ENCODE measurements at regions of chr2 and their contacts with region 1.

Region 1: DNA sequence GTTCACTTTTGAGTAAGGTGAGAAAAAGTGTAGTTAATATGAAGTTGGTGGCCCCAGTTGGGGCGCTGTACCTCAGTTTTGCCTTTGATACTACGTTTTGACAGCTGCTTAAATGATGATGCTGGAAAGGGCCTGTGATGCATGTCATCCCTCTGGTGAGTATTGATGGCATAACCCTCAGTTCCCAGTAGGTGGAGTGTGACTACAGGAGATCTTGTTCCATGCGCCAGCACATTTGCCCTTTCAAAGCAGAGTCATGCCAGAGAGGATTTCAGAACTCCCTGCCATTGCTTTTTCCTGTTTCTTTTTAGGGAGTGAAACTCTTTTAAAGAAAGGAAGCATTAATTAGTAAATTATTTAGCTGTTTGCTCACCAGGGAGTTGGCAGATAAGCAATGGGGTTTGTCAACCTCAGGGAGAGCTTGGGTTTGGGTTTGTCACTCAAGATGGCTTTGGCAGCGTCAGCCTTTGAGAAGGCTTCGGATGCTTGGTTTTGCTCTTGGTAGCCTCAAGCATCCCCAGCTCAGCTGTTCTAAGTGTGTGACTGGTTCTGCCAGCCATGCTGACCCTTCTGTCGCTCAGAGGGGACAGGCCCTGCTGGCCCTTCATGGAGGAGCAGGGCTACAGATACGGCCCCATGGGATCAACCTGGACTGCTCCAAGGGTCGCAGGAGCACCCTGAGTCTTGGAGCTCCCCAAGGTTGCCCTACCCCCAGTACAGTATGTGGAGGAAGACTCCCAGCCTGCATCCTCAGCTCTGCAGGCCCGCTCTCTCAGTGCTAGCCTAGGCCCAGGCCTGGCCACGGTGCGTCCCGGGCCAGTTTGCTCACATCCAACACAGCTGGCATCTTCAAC is 29.1 kb downstream of the ARMC9 start:
- DNase-seq: peak; percentile 65
- H3K4me3 ChIP-seq: no peak overlapping the region
- H3K27ac ChIP-seq: no peak overlapping the region
- H3K4me1 ChIP-seq: no peaks in the 10 kb centered on the region
- H3K27me3 ChIP-seq: no peaks in the 10 kb centered on the region
- CTCF ChIP-seq: peak; percentile 89 to 90

Region 2: DNA sequence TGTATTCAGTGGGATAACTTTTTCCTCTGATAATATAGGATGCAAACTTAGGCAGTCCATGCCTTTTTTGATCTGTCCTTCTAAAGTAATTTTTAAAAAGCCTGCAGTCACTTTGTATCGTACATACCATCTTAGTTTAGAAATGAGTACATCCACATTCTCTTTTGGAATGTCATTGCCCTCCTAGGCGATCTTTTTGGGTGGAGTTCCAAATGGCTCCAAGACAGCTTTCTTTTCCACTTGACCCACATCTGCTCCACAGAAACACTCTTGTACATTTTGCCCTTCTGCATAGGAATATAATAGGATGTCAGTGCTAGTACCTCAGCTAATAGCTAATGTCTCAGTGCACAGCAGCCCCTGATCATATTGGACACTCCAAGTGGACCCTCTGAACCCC is 80.9 kb before region 1 on chr2:
- CTCF ChIA-PET with region 1: no interaction called
- dilution Hi-C with region 1: loop called (anchors 5 kb)
- in situ Hi-C with region 1: no loop called
- intact Hi-C with region 1: no loop called
- DNase-seq: no peak
- H3K4me3 ChIP-seq: no peak overlapping the region
- H3K27ac ChIP-seq: no peak overlapping the region
- H3K4me1 ChIP-seq: no peaks in the 10 kb centered on the region
- H3K27me3 ChIP-seq: no peaks in the 10 kb centered on the region
- CTCF ChIP-seq: no peak

Region 3: GRCh38 chr2:231270221-231271114 is 42.9 kb after region 1 on chr2:
- CTCF ChIA-PET with region 1: no interaction called
- dilution Hi-C with region 1: loop called (anchors 5 kb)
- in situ Hi-C with region 1: no loop called
- intact Hi-C with region 1: no loop called
- DNase-seq: no peak
- H3K4me3 ChIP-seq: no peak overlapping the region
- H3K27ac ChIP-seq: no peak overlapping the region
- H3K4me1 ChIP-seq: no peaks in the 10 kb centered on the region
- H3K27me3 ChIP-seq: no peaks in the 10 kb centered on the region
- CTCF ChIP-seq: no peak

Region 4: GRCh38 chr2:231411831-231412617 is 184.5 kb after region 1 on chr2:
- CTCF ChIA-PET with region 1: interaction called, 3 read pairs
- dilution Hi-C with region 1: loop called (anchors 5 kb)
- in situ Hi-C with region 1: loop called (anchors 5 to 10 kb)
- intact Hi-C with region 1: loop called (anchors 1 kb)
- DNase-seq: peak; percentile 75
- H3K4me3 ChIP-seq: peak overlapping the region; percentile 59 to 68 (median 61)
- H3K27ac ChIP-seq: peak overlapping the region; percentile 48
- H3K4me1 ChIP-seq: peaks cover 12% of the 10 kb centered on the region
- H3K27me3 ChIP-seq: no peaks in the 10 kb centered on the region
- CTCF ChIP-seq: peak; percentile 91

Region 5: GRCh38 chr2:231557571-231558237 is 330.2 kb after region 1 on chr2:
- CTCF ChIA-PET with region 1: no interaction called
- dilution Hi-C with region 1: no loop called
- in situ Hi-C with region 1: no loop called
- intact Hi-C with region 1: loop called (anchors 5 kb)
- DNase-seq: peak; percentile 50
- H3K4me3 ChIP-seq: no peak overlapping the region
- H3K27ac ChIP-seq: no peak overlapping the region
- H3K4me1 ChIP-seq: no peaks in the 10 kb centered on the region
- H3K27me3 ChIP-seq: no peaks in the 10 kb centered on the region
- CTCF ChIP-seq: peak; percentile 62 to 78